WTC11 (cell line): ENCODE measurements at regions of chr4 and their contacts with region 1.

Region 1: GRCh38 chr4:2393353-2394270 is 24.8 kb downstream of the ZFYVE28 start:
- DNase-seq: peak; percentile 76
- ATAC-seq: peak; percentile 91
- H3K4me3 Mint-ChIP-seq: peak overlapping the region; percentile 59
- H3K27ac Mint-ChIP-seq: peak overlapping the region; percentile 83
- H3K4me1 Mint-ChIP-seq: peaks cover 56% of the 10 kb centered on the region
- H3K27me3 Mint-ChIP-seq: no peaks in the 10 kb centered on the region; the same call in 1 of the 2 replicates
- CTCF ChIP-seq: no peak

Region 2: DNA sequence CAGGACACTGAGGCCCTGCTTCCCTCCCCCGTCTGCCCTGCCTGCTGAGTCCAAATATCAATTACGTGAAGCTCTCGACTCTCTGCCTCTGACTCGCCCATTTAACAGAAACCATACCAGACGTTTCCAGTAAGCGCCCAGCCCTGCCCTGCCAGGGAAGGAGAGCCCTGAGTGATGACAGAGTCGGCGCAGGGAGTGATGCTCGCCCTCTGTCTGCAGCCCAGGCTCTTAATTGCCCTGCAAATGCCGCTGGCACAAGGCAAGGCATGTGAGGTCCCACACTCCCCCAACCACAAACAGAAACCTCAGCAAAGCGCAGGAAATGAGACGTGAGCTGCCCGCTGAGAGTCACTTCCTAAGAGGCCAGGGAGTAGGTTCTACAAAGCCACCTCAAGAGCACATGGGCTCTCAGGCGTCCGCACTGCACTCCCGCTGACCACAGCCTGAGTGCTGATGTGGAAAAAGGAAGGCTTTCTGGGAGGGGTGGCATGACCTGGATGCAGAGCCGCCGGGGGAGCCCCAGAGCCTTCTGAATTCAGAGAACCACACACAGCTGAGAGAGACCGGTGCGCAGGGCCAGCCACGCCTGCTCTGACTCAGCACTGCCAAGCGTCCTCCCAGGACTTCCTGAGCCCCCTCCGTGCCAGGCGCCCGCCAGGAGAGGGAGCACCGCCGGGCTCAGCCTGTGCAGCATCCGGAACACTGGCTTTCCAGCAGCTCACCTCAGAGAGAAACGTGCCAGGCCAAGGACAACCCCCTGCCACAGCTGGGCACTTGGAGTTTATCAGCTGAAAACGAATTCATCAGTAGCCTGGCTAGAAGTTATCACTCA is 19.5 kb after region 1 on chr4:
- CTCF ChIA-PET with region 1: interaction called, 13 read pairs
- POLR2A ChIA-PET with region 1: interaction called, 5 read pairs
- DNase-seq: peak; percentile 80
- ATAC-seq: peak; percentile 73
- H3K4me3 Mint-ChIP-seq: peak overlapping the region; percentile 62
- H3K27ac Mint-ChIP-seq: peak overlapping the region; percentile 91
- H3K4me1 Mint-ChIP-seq: peaks cover 55% of the 10 kb centered on the region
- H3K27me3 Mint-ChIP-seq: peaks cover 44% of the 10 kb centered on the region
- CTCF ChIP-seq: no peak

Region 3: DNA sequence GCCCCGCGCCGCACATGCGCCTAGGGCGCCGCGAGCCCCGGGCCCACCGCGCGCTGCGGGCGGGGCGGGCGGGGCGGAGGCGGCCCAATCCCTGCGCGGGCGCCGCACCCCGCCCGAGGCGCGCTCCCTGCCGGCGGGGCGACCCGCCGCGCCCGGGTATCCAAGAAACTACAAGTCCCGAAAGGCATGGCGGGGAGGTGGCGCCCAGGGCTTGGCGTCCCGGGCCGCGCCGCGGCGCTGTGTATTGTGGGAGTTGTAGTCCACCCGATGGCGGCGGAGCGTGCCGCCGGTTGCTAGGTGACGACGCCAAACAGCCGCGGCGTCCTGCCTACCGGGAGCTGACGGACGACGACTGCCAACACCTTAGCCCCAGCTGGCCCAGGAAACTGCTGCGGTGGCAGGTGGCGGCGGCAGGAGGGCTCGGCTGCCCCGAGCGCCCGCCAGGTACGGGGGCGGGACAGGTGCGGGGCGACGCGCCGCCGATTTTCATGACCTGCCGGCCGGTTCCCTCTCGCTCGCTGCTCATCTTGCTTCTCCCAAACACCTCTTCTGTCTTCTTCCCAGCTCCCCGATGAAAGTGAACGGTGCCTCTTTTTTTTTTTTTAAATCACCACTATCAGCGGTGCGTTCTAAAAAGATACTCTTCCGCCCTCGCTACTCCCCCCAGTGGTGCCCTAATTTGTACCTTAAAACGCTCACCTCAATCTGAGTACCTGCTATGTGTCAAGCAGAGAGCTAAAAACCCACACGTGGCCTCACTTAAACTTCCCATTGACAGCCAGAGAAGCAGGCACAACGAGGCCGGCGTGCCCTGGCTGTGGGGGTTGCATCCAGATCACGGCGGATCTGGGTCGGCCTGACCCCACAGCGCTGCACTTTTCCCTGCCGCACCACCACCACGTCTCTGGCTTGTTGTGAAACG is 25.3 kb after region 1 on chr4 and contains the start of gene CFAP99:
- CTCF ChIA-PET with region 1: interaction called, 16 read pairs
- POLR2A ChIA-PET with region 1: interaction called, 5 read pairs
- DNase-seq: peak; percentile 99
- ATAC-seq: peak; percentile 71
- H3K4me3 Mint-ChIP-seq: peak within 1 kb of the TSS; percentile 86
- H3K27ac Mint-ChIP-seq: no peak within 1 kb of the TSS
- H3K4me1 Mint-ChIP-seq: peaks cover 44% of the 10 kb centered on the region
- H3K27me3 Mint-ChIP-seq: peaks cover 78% of the 10 kb centered on the region
- CTCF ChIP-seq: no peak
- total RNA-seq, gene CFAP99: 0.23 to 0.41 TPM in 2 of 3 replicates, not detected in the other